K562 (cell line): ENCODE measurements at regions of chr7 and their contacts with region 1.

Region 1: DNA sequence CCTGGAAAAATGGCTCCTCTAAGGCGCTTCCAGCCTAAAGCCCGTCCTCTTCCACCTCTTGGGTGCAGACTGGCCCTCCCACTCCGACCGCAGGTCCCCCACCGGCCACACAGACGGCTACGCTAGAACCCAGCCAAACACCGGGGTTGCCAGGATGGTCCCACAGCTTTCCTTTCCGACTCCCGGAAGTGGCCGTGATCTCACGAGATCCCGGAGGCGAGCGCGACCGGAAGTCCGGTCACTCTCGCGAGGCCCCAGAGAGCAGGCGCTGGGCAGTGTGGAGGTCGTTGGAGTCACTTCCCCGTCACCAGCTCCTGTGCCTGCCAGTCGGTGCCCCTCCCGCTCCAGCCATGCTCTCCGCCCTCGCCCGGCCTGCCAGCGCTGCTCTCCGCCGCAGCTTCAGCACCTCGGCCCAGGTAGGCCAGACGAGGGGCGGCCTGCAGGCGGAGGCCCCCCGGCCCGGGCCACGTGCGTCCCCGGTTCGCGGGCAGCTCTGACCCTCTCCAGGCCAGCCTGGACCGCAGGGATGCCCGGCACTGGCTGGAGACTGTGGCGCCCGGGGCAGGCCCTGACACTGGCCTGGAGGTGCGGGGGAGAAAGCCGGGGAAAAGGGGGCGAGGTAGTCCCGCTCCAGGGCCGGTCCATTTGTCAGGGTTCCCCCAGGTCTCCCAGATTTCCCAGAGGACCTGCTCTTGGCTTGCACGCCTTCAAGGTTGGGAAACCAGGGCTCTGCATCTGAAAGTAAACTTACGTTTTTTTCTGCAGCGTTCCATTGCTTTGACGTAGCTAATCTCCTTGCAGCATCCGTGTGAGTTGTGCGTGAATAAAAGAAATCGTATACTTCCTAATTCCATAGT is at the starts of genes MDH2 and STYXL1:
- DNase-seq: peak; percentile 96 to 99 (median 96)
- ATAC-seq: peak; percentile 96
- H3K4me3 ChIP-seq: peak within 1 kb of the TSS; percentile 87
- H3K27ac ChIP-seq: peak within 1 kb of the TSS; percentile 93
- H3K4me1 ChIP-seq: peaks cover 29 to 32% of the 10 kb centered on the region in 2 experiments
- H3K27me3 ChIP-seq: no peaks in the 10 kb centered on the region
- CTCF ChIP-seq: peak in 1 of 3 experiments; percentile 44; a peak in 2 of 6 replicates
- EP300 ChIP-seq: no peak; the same call in 1 of the 2 replicates
- POLR2A ChIP-seq: peak; percentile 98
- RAD21 ChIP-seq: 0 out of 4 replicates have a peak, but pooled peaks of 1 of the 2 experiments have one; percentile 2
- polyA plus RNA-seq, gene MDH2: 242 to 411 TPM
- polyA plus RNA-seq, gene STYXL1: 36.5 to 49.7 TPM

Region 2: DNA sequence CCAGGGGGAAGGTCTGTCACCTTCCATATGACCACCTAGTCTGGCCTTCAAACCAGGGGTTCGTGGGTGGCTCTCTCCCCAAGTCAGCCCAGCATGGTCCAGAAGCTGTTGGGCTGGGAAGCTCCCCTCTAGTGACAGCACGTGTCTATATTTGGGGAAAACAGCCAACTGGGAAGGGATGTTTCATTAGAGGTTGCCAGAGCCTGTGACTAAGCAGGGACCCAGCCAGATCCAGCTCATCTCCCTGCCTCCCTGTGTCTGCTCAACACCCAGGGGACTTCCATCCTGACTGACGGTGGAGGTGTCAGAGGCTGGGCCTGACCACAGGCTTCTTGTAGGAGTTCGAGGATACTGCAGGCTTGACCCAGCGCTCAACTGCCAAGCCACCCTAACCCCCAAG is 10.7 kb before region 1 on chr7:
- CTCF ChIA-PET with region 1: no interaction called
- POLR2A ChIA-PET with region 1: interaction called, 10 read pairs
- in situ Hi-C with region 1: no loop called
- intact Hi-C with region 1: no loop called
- DNase-seq: no peak
- ATAC-seq: no peak
- H3K4me3 ChIP-seq: no peak overlapping the region
- H3K27ac ChIP-seq: no peak overlapping the region
- H3K4me1 ChIP-seq: no peaks in the 10 kb centered on the region; a peak in 2 of 5 replicates
- H3K27me3 ChIP-seq: no peaks in the 10 kb centered on the region
- CTCF ChIP-seq: no peak
- EP300 ChIP-seq: no peak
- POLR2A ChIP-seq: no peak
- RAD21 ChIP-seq: no peak

Region 3: GRCh38 chr7:76060842-76061241 is 12.8 kb after region 1 on chr7:
- CTCF ChIA-PET with region 1: no interaction called
- POLR2A ChIA-PET with region 1: interaction called, 30 read pairs
- in situ Hi-C with region 1: no loop called
- intact Hi-C with region 1: no loop called
- DNase-seq: peak in 1 of 4 experiments; percentile 8
- ATAC-seq: no peak
- H3K4me3 ChIP-seq: no peak overlapping the region
- H3K27ac ChIP-seq: no peak overlapping the region
- H3K4me1 ChIP-seq: peaks cover 0 to 16% of the 10 kb centered on the region in 2 experiments; a peak in 2 of 5 replicates
- H3K27me3 ChIP-seq: no peaks in the 10 kb centered on the region
- CTCF ChIP-seq: no peak
- EP300 ChIP-seq: no peak
- POLR2A ChIP-seq: no peak
- RAD21 ChIP-seq: no peak